Dorsolateral prefrontal cortex (tissue), 120 donors: ENCODE measurements at regions of chr6 and their contacts with region 1.

Region 1: GRCh38 chr6:43769526-43770416 is at the start of gene VEGFA:
- DNase-seq: peak; percentile 80 to 92 (median 90)
- H3K4me3 ChIP-seq: peak within 1 kb of the TSS; percentile 54 to 89 (median 77)
- H3K27ac ChIP-seq: peak within 1 kb of the TSS in 56 of 59 donors; percentile 21 to 97 (median 84)
- H3K27me3 ChIP-seq: no peaks in the 10 kb centered on the region
- CTCF ChIP-seq: peak; percentile 85 to 99 (median 95)
- total RNA-seq, gene VEGFA: 19.7 to 440 (median 56.8) TPM

Region 2: DNA sequence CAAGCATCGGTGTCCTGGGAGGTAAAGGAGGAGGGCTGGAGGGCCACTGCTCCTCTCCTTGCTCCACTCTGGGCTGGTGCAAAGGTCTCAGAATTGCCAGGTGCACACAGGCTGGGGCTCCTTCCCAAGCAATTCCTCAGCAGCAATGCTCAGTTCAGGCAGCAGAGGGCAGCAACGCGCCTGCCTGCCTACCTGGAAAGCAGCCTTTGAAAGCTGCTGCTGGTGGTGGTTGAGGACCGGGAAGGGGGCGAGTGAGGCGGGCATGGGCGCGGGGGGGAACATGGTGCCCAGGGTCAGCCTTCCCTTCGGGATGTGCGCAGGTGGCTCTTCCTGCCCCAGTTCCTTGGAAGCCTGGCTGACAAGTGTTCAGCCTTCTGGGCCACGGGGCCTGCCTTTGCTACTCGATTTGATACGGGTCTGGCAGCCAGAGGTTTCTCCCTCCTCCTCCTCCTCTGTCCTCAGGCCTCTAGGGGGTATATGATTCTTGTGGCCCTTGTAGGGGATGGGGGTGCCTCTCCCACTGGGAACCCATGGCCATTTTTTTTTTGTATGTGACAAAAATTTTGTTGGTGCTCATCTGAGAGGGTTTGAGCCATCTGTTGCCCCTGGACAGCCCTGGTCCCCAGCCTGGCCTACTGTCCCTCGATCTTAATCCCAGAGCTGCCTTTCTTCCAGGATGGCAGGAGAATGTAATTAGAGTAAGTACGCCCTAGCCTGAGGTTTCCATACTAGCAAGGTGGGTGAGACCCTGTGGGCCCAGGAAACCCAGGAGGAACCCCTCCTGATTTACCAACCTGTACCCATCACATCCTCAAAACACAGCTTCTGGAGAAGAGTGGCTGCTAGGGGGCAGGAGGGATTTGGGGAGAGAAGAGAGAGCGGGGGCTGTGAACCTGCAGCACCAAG is 102.3 kb before region 1 on chr6:
- intact Hi-C with region 1: loop called (anchors 2 to 5 kb)
- DNase-seq: peak; percentile 72 to 91 (median 88)
- H3K4me3 ChIP-seq: peak overlapping the region in 28 of 59 donors; percentile 8 to 43 (median 24)
- H3K27ac ChIP-seq: peak overlapping the region in 56 of 59 donors; percentile 2 to 94 (median 80)
- H3K27me3 ChIP-seq: no peaks in the 10 kb centered on the region
- CTCF ChIP-seq: peak; percentile 68 to 98 (median 94)

Region 3: DNA sequence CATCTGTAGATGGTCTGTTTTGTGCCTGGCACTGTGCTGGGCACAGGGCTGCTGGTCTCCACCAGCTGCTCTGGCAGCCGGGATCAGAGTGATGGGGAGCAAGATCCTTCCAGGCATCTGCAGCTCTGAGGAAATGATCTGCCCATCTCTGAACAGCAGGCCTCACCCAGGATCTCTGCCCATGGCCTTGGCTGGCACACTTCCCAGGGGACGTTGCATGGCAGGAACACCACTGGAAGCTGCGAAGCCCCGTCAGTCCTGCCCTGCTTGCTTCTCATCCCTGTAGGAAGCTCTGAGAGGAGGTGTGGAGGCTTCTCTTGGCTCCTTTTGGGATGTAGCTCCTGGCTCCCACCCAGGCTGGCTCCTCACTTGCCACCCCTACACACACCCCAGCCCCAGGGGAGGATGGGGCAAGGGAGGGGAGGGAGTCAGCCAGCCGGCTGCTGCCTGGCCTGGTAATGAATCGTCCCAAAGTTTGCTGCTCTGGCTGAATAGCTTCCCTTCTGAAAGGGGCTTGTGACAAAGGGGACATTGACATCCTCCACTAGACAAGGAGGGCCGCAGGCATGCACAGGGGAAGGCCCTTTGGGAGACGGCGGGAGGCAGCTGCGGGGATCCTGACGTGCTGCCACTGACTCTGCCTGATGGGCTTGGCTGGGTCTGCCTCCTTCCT is 109.2 kb after region 1 on chr6:
- intact Hi-C with region 1: loop called in 1 of 2 experiments (anchors 5 kb)
- DNase-seq: peak; percentile 35 to 79 (median 66)
- H3K4me3 ChIP-seq: no peak overlapping the region
- H3K27ac ChIP-seq: peak overlapping the region in 39 of 59 donors; percentile 6 to 79 (median 51)
- H3K27me3 ChIP-seq: no peaks in the 10 kb centered on the region
- CTCF ChIP-seq: no peak

Region 4: GRCh38 chr6:44135875-44136274 is 366.1 kb after region 1 on chr6:
- intact Hi-C with region 1: no loop called
- DNase-seq: no peak
- H3K4me3 ChIP-seq: no peak overlapping the region
- H3K27ac ChIP-seq: peak overlapping the region in 32 of 59 donors; percentile 5 to 82 (median 42)
- H3K27me3 ChIP-seq: no peaks in the 10 kb centered on the region
- CTCF ChIP-seq: peak in 2 of 56 donors; percentile 10 to 13

Region 5: DNA sequence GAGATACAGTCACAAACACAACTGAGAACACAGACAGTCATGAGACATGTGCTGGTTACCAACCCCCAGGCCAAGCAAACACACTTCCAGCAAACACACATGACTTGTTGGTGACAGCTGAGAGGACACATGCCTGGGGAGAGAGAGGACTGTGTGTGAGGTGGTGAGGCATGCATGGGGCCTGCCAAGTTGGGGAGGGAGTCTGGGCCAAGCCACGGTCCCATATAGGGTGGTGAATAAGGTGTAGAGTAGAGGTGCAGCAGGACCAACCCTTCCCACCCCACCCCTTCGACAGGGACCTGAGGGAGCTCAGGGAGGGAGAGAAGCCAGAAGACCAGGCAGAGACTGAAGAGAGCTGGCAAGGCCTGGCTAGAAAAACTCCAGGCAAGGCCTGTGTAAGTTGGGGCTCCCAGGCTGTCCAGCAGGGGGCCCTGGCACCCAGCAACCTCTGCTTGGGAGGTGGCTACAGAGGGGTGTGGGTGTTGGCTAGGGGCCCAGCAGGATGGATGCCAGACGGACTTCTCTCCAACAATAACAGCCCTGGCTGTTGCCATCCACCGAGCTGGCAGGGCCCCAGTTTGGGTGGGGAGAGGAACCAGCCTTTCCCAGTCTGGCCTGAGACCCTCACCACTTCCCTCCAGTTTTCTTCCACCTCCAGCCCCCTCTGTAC is 451.7 kb after region 1 on chr6:
- intact Hi-C with region 1: loop called in 1 of 2 experiments (anchors 10 kb)
- DNase-seq: peak in 9 of 10 donors; percentile 57 to 81 (median 70)
- H3K4me3 ChIP-seq: peak overlapping the region in 5 of 59 donors; percentile 2 to 19 (median 13)
- H3K27ac ChIP-seq: peak overlapping the region in 54 of 59 donors; percentile 29 to 97 (median 74)
- H3K27me3 ChIP-seq: no peaks in the 10 kb centered on the region
- CTCF ChIP-seq: peak in 55 of 56 donors; percentile 36 to 75 (median 63)